ENCODE measurements at regions of chr6 and their contacts with region 1.

Region 1: DNA sequence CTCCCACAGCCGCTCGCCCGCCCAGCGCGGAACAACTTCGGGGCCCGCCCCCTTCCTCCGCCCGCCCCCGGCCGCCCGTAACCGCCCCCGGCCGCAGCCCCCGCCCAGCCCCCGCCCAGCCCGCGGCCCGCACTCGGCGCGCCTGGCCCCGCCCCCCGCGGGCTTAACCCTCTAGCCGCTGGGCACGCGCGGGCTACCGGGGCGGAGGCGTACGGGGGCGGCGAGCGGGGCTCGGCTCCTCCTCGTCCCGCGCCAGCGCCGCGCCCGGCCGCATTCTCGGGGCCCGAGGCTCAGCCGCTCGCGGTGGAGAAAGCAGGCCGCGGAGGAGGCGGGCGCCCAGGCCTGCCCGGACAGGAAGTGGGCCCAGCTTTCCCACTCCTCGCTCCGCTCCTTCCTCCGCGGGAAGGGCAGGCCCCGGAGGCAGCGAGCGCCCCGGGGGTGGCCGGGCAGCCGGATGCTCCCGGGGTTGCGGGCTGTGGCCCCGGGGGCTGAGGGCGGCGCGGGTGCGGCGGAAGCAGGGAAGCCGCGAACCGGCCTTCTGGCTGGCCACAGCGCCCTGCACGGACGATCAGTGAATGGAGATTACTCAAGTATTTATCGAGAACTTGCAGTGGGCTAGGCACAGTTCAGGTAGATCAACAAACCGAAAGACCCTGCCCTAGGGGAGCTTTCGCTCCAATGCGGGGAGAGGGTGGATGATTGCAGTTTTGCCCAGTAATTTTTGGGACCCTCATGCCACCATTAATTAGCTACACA is at the start of gene TRAM2:
- DNase-seq: peak; percentile 65
- H3K4me3 Mint-ChIP-seq: peak within 1 kb of the TSS; percentile 78
- H3K27ac Mint-ChIP-seq: peak within 1 kb of the TSS; percentile 65
- H3K4me1 Mint-ChIP-seq: peaks cover 43% of the 10 kb centered on the region
- H3K27me3 Mint-ChIP-seq: no peaks in the 10 kb centered on the region
- total RNA-seq, gene TRAM2: 2.5 to 2.9 TPM

Region 2: GRCh38 chr6:52517502-52518278 is 59.5 kb before region 1 on chr6:
- CTCF ChIA-PET with region 1: no interaction called
- intact Hi-C with region 1: loop called (anchors 1 kb)
- DNase-seq: peak; percentile 78
- H3K4me3 Mint-ChIP-seq: no peak overlapping the region
- H3K27ac Mint-ChIP-seq: peak overlapping the region; percentile 48
- H3K4me1 Mint-ChIP-seq: peaks cover 7% of the 10 kb centered on the region
- H3K27me3 Mint-ChIP-seq: no peaks in the 10 kb centered on the region

Region 3: DNA sequence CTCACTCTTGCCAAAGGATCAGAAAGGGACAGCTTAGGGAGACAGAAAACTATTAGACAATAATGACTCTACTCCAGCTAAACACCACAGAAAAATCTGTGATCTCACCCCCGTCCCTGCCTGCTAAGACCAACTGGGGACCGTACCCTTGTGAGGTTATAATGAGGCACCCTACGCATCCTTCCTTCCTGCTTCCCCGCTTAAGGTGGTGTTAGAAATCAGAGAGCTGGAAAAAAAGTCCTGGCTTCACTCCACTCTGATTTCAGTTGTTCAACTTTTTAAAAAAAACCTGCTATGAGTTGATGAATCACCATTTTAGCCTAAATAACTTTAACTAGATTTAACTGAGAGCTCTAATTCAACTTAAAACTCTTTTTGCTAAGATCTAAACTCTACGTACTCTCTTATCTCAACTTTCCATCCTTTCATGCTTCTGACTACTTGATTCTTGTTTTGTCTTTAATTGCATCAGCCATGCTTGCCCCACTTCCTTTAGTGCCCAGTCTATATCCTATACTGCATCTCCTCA is 57.9 kb after region 1 on chr6:
- CTCF ChIA-PET with region 1: interaction called, 3 read pairs
- intact Hi-C with region 1: loop called (anchors 1 kb)
- DNase-seq: peak; percentile 75
- H3K4me3 Mint-ChIP-seq: peak overlapping the region; percentile 25
- H3K27ac Mint-ChIP-seq: peak overlapping the region; percentile 67
- H3K4me1 Mint-ChIP-seq: peaks cover 18% of the 10 kb centered on the region
- H3K27me3 Mint-ChIP-seq: peaks cover 5% of the 10 kb centered on the region

Region 4: GRCh38 chr6:52984247-52984646 is 407.0 kb after region 1 on chr6:
- CTCF ChIA-PET with region 1: no interaction called
- intact Hi-C with region 1: loop called (anchors 5 kb)
- DNase-seq: peak; percentile 81
- H3K4me3 Mint-ChIP-seq: no peak overlapping the region
- H3K27ac Mint-ChIP-seq: peak overlapping the region; percentile 82
- H3K4me1 Mint-ChIP-seq: peaks cover 63% of the 10 kb centered on the region
- H3K27me3 Mint-ChIP-seq: peaks cover 8% of the 10 kb centered on the region